WTC11 (cell line): ENCODE measurements at regions of chr2 and their contacts with region 1.

Region 1: GRCh38 chr2:71331581-71332434 is at the start of gene ZNF638:
- DNase-seq: peak; percentile 91
- ATAC-seq: peak; percentile 92
- H3K4me3 Mint-ChIP-seq: peak within 1 kb of the TSS; percentile 99
- H3K27ac Mint-ChIP-seq: peak within 1 kb of the TSS; percentile 100
- H3K4me1 Mint-ChIP-seq: peaks cover 37% of the 10 kb centered on the region
- H3K27me3 Mint-ChIP-seq: no peaks in the 10 kb centered on the region
- CTCF ChIP-seq: peak; percentile 62; the same call in 1 of the 2 replicates
- total RNA-seq, gene ZNF638: 109 to 131 TPM (median 128 TPM) in 3 replicates

Region 2: DNA sequence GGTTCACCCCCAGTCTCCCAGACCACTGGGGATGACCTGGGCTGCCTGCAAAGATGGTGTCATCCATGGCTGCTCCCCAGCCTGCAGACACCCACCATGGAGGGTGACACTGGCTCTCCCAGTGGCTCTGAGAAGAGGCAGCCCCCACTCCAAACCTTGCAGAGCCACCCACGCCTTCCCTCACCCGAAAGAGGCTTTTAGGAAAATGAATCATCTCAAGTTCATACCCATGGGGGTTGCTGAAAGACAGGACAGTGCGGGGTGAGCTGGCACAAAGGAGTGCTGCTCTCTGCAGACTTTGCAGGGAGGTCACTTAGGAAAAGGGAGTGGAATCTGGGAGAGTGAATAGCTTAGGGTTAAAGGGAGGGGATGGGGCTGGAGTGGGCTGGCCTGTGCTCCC is 165.0 kb before region 1 on chr2:
- CTCF ChIA-PET with region 1: no interaction called
- POLR2A ChIA-PET with region 1: no interaction called
- DNase-seq: no peak
- ATAC-seq: no peak
- H3K4me3 Mint-ChIP-seq: no peak overlapping the region
- H3K27ac Mint-ChIP-seq: no peak overlapping the region
- H3K4me1 Mint-ChIP-seq: peaks cover 13% of the 10 kb centered on the region
- H3K27me3 Mint-ChIP-seq: no peaks in the 10 kb centered on the region; the same call in 1 of the 2 replicates
- CTCF ChIP-seq: no peak

Region 3: GRCh38 chr2:71226965-71227560 is 104.7 kb before region 1 on chr2 and contains the start of gene PAIP2B:
- CTCF ChIA-PET with region 1: interaction called, 12 read pairs
- POLR2A ChIA-PET with region 1: interaction called, 11 read pairs
- DNase-seq: peak; percentile 99
- ATAC-seq: peak; percentile 97
- H3K4me3 Mint-ChIP-seq: peak within 1 kb of the TSS; percentile 98
- H3K27ac Mint-ChIP-seq: peak within 1 kb of the TSS; percentile 96
- H3K4me1 Mint-ChIP-seq: peaks cover 12% of the 10 kb centered on the region
- H3K27me3 Mint-ChIP-seq: peaks cover 8% of the 10 kb centered on the region; the same call in 1 of the 2 replicates
- CTCF ChIP-seq: no peak
- total RNA-seq, gene PAIP2B: 19.3 to 22.4 TPM (median 22.2 TPM) in 3 replicates

Region 4: DNA sequence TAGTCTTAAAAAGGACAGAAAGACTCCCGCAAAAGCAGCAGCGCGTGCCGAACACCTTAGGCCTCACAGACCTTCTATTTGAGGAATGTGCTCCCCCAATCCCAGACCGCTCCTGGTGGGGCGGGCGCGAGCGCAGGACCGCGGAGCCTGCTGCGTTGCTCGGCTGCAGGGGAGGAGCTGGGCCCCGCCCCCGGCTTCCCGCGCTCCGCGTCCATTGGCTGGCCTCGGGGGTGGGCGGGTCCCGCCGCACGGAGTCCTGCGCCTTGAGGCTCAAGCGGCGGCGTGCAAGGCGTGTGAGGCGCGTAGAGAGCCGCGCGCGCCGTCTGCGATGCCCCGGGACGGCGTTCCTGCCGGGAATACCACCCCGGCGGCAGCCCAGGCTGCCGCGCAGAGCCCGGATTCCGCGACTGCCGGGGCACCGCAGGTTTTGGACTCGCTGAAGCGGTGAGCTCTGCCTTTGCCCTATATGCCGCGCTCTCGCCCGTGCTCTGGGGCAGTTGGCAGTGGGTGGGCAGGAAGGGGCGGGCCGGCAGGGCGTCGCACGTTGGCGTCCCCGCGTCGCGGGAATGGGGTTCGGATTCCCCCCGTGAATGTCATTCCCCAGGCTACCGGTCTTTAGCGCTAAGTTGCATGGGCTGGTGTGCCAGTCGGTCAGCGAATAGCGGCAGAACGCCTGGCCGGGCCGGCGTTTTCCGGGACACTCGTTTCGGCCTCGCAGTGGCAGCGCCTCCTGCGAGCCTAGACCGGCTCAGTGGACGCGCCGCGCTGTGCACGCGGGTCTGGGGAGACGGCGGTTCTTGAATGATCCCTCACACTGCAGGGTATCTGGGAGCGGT is 55.3 kb before region 1 on chr2:
- CTCF ChIA-PET with region 1: interaction called, 20 read pairs
- POLR2A ChIA-PET with region 1: interaction called, 5 read pairs
- DNase-seq: peak; percentile 98
- ATAC-seq: peak; percentile 95
- H3K4me3 Mint-ChIP-seq: peak overlapping the region; percentile 80
- H3K27ac Mint-ChIP-seq: no peak overlapping the region
- H3K4me1 Mint-ChIP-seq: peaks cover 38% of the 10 kb centered on the region
- H3K27me3 Mint-ChIP-seq: peaks cover 55% of the 10 kb centered on the region
- CTCF ChIP-seq: no peak

Region 5: DNA sequence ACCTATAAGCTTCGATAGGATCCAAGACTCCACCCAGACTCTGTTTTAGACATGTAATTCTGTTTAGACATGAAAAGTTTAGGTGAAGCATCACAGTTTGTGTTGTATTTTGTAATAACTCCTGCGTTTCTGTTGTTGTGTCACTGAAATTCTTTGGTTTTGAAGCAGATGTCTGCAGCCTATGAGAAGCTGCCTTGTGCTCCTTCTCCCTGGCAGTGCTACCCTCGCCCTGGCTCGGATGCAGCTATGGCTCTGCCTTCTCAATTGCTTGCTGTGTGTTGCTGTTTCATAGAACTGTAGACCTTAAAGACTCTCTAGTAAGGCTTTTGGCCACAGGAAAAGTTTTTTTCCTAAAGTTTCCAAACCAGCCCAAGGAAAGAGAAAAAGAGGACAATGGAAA is 40.4 kb before region 1 on chr2:
- CTCF ChIA-PET with region 1: no interaction called
- POLR2A ChIA-PET with region 1: no interaction called
- DNase-seq: no peak
- ATAC-seq: no peak
- H3K4me3 Mint-ChIP-seq: no peak overlapping the region
- H3K27ac Mint-ChIP-seq: no peak overlapping the region
- H3K4me1 Mint-ChIP-seq: no peaks in the 10 kb centered on the region
- H3K27me3 Mint-ChIP-seq: no peaks in the 10 kb centered on the region
- CTCF ChIP-seq: no peak

Region 6: DNA sequence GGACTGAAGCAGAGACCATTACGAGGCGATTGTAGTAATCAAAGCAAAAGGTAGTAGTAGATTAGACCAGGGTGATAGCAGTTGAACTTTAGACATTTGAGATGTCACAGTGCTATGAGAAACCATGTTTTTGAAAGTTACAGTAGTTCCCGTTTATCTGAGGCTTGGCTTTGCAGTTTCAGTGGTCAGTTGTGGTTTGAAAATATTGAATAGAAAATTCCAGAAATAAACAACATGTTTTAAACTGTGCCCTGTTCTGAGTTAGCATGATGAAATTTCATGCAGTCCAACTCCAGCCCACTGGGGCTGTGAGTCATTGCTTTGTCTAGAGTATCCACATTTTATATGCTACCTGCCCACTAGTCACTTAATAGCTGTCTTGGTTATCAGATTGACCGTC is 47.3 kb after region 1 on chr2:
- CTCF ChIA-PET with region 1: interaction called, 14 read pairs
- POLR2A ChIA-PET with region 1: no interaction called
- DNase-seq: no peak
- ATAC-seq: no peak
- H3K4me3 Mint-ChIP-seq: no peak overlapping the region
- H3K27ac Mint-ChIP-seq: no peak overlapping the region
- H3K4me1 Mint-ChIP-seq: no peaks in the 10 kb centered on the region
- H3K27me3 Mint-ChIP-seq: no peaks in the 10 kb centered on the region
- CTCF ChIP-seq: no peak